Activated T-helper 1 cell treated with anti-CD3 and anti-CD28 coated beads, Interleukin-12 subunit alpha, Interleukin-12 subunit beta, Interleukin-2, Interleukin-4 antibody, amounts not matched to agents 30 ng/mL and 10 ng/mL and 1 ng/mL, durations not matched to agents 14 hours and 24 hours and 36 hours (primary cell): ENCODE measurements at regions of chr12 and their contacts with region 1.

Region 1: GRCh38 chr12:7970475-7971252 is 34.7 kb upstream of the SLC2A3 start:
- DNase-seq: peak; percentile 85
- H3K4me3 Mint-ChIP-seq: peak overlapping the region; percentile 98
- H3K27ac Mint-ChIP-seq: peak overlapping the region; percentile 100
- H3K4me1 Mint-ChIP-seq: peaks cover 40% of the 10 kb centered on the region
- H3K27me3 Mint-ChIP-seq: no peaks in the 10 kb centered on the region

Region 2: GRCh38 chr12:7989827-7990551 is 19.3 kb after region 1 on chr12:
- intact Hi-C with region 1: loop called (anchors 1 kb)
- DNase-seq: peak; percentile 76
- H3K4me3 Mint-ChIP-seq: peak overlapping the region; percentile 54
- H3K27ac Mint-ChIP-seq: peak overlapping the region; percentile 93
- H3K4me1 Mint-ChIP-seq: peaks cover 32% of the 10 kb centered on the region
- H3K27me3 Mint-ChIP-seq: no peaks in the 10 kb centered on the region

Region 3: GRCh38 chr12:8026291-8026900 is 55.7 kb after region 1 on chr12:
- intact Hi-C with region 1: loop called (anchors 1 kb)
- DNase-seq: peak; percentile 96
- H3K4me3 Mint-ChIP-seq: peak overlapping the region; percentile 93
- H3K27ac Mint-ChIP-seq: peak overlapping the region; percentile 99
- H3K4me1 Mint-ChIP-seq: peaks cover 19% of the 10 kb centered on the region
- H3K27me3 Mint-ChIP-seq: no peaks in the 10 kb centered on the region